PC-9 (cell line): ENCODE measurements at regions of chr2 and their contacts with region 1.

Region 1: DNA sequence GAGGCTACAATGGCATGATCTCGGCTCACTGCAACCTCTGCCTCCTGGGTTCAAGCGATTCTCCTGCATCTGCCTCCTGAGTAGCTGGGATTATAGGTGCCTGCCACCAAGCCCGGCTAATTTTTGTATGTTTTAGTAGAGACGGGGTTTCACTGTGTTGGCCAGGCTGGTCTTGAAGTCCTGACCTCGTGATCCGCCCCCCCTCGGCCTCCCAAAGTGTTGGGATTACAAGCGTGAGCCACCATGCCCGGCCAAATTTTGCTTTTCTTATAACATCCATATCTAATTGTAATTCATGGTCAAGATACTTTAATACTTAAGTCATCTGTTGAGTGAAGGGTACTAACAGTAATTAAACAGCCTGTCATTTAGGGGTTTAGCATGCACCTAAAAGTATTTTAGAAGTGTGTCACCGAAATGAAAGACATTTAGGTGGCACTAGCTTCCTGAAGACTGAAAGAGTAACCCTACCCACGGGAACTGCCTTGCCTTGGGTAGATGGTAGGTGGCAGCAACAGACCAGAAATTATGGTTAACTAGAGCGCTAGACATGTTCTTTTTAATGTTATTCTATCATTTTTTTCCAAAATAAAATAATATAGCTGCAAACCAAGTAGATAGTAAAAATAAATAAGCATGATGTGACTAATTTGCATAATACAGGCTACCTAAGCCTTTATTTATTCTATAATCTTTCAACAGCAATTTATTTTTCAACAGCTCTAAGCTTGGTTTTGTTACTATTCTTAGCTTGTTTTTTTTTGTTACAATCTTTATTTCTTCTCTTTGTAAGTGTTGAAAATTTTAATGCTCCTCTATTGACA is 8.6 kb upstream of the ACYP2 start:
- DNase-seq: peak; percentile 51 to 63
- H3K4me3 ChIP-seq: no peak overlapping the region
- H3K27ac ChIP-seq: no peak overlapping the region
- H3K4me1 ChIP-seq: peaks cover 21% of the 10 kb centered on the region
- H3K27me3 ChIP-seq: no peaks in the 10 kb centered on the region
- CTCF ChIP-seq: peak; percentile 88

Region 2: DNA sequence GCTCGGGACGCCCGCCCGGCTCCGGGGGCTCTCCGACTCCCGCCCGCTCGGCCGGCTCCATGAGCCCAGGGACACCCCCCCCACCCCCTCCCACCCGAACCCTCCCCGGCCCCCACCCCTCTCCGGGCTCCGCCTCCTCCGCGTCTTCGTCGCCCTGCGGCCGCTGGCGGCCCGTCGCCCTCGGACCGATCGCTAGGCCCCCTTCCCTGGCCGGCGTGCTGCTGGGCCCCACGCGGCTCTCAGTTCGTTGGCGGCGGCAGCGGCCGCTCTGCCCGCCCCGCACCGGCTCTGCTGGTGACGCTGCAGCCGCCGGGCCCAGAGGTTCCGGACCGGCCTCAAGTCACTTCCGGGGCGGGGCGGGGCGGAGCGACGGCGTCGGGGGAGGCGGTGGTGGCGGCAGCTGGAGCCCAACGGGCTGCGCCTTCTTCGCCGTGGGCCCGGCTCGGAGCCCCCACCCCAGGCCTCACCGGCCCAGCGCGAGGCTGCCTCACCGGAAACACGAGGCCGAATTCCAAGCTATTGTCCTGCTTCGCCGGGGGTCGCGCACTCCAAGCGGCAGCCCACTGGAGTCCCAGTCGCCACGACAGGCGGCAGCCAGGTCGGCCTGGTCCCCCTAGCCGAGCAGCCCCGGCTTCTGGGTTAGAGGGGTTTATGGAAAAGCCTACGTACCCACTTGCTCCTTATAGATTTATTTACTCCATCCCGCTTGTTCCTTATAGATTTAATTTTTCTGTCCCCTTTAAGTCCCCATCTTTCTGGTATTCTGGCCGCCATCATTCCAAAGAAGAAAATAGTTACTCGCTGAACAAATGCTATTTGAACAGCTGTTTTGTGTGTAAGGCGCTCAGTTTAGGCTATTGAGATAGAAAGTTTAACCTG is 135.9 kb before region 1 on chr2 and contains the start of gene PSME4:
- CTCF ChIA-PET with region 1: no interaction called
- POLR2A ChIA-PET with region 1: no interaction called
- intact Hi-C with region 1: loop called (anchors 5 kb)
- DNase-seq: peak; percentile 81 to 92
- H3K4me3 ChIP-seq: peak within 1 kb of the TSS; percentile 79
- H3K27ac ChIP-seq: peak within 1 kb of the TSS; percentile 57
- H3K4me1 ChIP-seq: peaks cover 29% of the 10 kb centered on the region
- H3K27me3 ChIP-seq: no peaks in the 10 kb centered on the region
- CTCF ChIP-seq: no peak
- total RNA-seq, gene PSME4: 58.3 and 99.5 TPM in 2 replicates

Region 3: DNA sequence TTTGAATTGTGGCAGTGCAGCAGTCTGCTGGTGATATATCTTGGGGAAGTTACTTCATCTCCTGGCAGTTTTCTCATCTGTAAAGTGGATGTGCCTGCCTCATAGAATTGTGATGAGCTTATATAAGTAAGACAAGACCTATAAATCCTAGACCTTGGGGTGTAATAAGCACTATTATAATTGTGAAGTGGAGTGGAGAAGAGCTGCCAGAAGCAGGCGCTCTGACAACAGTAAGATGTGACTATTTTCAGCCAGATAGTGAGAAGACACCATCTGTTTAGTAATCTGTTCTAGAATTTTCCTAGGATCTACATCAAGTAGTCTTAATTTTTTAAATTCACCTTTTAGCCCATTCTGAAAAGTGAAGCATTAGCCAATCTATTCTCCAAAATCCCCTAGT is 234.8 kb after region 1 on chr2:
- CTCF ChIA-PET with region 1: no interaction called
- POLR2A ChIA-PET with region 1: interaction called, 16 read pairs
- intact Hi-C with region 1: no loop called
- DNase-seq: no peak
- H3K4me3 ChIP-seq: no peak overlapping the region
- H3K27ac ChIP-seq: no peak overlapping the region
- H3K4me1 ChIP-seq: no peaks in the 10 kb centered on the region
- H3K27me3 ChIP-seq: no peaks in the 10 kb centered on the region
- CTCF ChIP-seq: no peak

Region 4: GRCh38 chr2:54503192-54503591 is 396.3 kb after region 1 on chr2:
- CTCF ChIA-PET with region 1: interaction called, 4 read pairs
- POLR2A ChIA-PET with region 1: no interaction called
- intact Hi-C with region 1: loop called (anchors 1 kb)
- DNase-seq: peak in 1 of 2 experiments; percentile 10
- H3K4me3 ChIP-seq: no peak overlapping the region
- H3K27ac ChIP-seq: no peak overlapping the region
- H3K4me1 ChIP-seq: no peaks in the 10 kb centered on the region
- H3K27me3 ChIP-seq: no peaks in the 10 kb centered on the region
- CTCF ChIP-seq: peak; percentile 68

Region 5: DNA sequence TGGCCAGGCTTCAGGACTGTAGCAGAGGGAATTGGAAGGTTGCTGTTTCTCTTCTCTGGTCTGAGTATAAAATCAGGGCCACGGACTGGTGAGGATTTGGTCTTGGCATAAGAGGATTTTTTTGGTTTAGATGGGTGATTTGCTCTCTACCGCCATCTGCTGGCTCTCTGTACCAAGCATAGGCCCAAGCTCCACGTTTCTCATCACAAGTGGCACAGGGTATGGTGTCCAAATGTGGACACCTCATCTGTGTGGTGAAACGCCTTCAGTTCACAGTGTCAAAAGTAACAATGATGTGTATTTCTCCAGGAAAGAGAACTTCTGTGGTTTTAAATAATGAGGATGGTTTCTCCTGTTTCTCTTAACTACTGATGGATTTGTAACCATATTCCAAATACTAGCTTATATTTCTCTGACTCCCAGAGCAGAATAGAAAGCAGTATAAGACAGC is 731.8 kb after region 1 on chr2:
- CTCF ChIA-PET with region 1: interaction called, 5 read pairs
- POLR2A ChIA-PET with region 1: no interaction called
- intact Hi-C with region 1: loop called (anchors 1 kb)
- DNase-seq: peak; percentile 50 to 63
- H3K4me3 ChIP-seq: no peak overlapping the region
- H3K27ac ChIP-seq: no peak overlapping the region
- H3K4me1 ChIP-seq: no peaks in the 10 kb centered on the region
- H3K27me3 ChIP-seq: no peaks in the 10 kb centered on the region
- CTCF ChIP-seq: peak; percentile 98